CD8-positive, alpha-beta T cell (primary cell): ENCODE measurements at regions of chr2 and their contacts with region 1.

Region 1: DNA sequence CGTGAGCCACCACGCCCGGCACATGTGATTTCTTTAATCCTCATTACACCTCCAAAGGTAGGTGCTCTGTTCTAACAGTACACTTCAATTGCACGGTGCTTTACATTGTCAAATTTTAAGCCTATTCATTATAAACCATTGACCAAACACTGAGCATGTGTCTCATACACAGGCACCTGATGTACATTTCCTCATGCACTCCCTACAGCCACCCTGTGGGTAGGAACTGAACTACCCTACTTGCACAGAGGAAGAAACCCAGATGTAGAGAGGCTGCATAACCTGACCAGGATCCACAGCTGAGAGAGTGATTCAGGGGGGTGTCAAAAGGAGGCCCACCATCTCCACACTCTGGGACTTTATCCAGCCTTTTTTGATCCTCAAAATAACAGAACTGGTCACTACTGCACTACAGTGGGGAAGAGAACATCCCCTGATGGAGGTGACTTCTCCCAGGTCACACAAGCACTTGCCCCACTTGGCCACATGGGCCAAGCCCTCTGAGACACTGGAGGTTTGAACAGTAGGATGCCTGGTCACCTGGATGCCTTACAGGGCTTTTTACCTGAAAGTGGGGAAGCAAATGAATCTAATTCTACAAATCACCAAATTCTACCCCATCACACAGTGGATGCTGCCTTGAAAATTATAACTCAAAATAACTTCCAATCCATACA is 6.9 kb upstream of the DPYSL5 start:
- DNase-seq: peak in 1 of 9 experiments; percentile 8
- ATAC-seq: no peak
- H3K4me3 ChIP-seq: no peak overlapping the region
- H3K4me3 Mint-ChIP-seq: no peak overlapping the region
- H3K27ac ChIP-seq: no peak overlapping the region
- H3K27ac Mint-ChIP-seq: no peak overlapping the region
- H3K4me1 ChIP-seq: no peaks in the 10 kb centered on the region
- H3K4me1 Mint-ChIP-seq: no peaks in the 10 kb centered on the region
- H3K27me3 ChIP-seq: peaks cover 0 to 5% of the 10 kb centered on the region in 2 experiments
- H3K27me3 Mint-ChIP-seq: peaks cover 33% of the 10 kb centered on the region
- CTCF ChIP-seq: no peak

Region 2: GRCh38 chr2:26692279-26692896 is 148.7 kb before region 1 on chr2 and contains the start of gene KCNK3:
- CTCF ChIA-PET with region 1: no interaction called
- POLR2A ChIA-PET with region 1: no interaction called
- intact Hi-C with region 1: loop called in 1 of 2 experiments (anchors 5 kb)
- DNase-seq: peak; percentile 4 to 57 (median 38)
- ATAC-seq: peak; percentile 93
- H3K4me3 ChIP-seq: no peak within 1 kb of the TSS
- H3K4me3 Mint-ChIP-seq: peak within 1 kb of the TSS; percentile 60
- H3K27ac ChIP-seq: no peak within 1 kb of the TSS
- H3K27ac Mint-ChIP-seq: no peak within 1 kb of the TSS
- H3K4me1 ChIP-seq: peaks cover 5% of the 10 kb centered on the region
- H3K4me1 Mint-ChIP-seq: peaks cover 5% of the 10 kb centered on the region
- H3K27me3 ChIP-seq: peaks cover 18 to 21% of the 10 kb centered on the region in 2 experiments
- H3K27me3 Mint-ChIP-seq: peaks cover 53% of the 10 kb centered on the region
- CTCF ChIP-seq: no peak
- total RNA-seq, gene KCNK3: not detected

Region 3: DNA sequence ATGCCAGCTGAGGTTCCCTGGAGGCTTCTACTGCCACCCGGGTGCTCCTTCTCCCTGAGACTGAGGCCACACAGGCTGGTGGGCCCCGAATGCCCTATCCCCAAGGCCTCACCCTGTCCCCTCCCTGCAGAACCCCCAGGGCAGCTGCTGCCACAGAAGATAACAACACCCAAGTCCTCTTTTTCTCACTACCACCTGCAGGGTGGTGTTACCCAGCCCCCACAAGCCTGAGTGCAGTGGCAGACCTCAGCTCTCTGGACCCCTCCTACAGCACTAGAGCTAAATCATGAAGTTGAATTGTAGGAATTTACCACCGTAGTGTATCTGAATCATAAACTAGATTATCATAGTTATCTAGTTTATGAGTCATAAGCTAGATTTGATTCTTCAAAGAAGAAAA is 62.6 kb before region 1 on chr2:
- CTCF ChIA-PET with region 1: no interaction called
- POLR2A ChIA-PET with region 1: no interaction called
- intact Hi-C with region 1: no loop called
- DNase-seq: no peak
- ATAC-seq: no peak
- H3K4me3 ChIP-seq: no peak overlapping the region
- H3K4me3 Mint-ChIP-seq: no peak overlapping the region
- H3K27ac ChIP-seq: no peak overlapping the region
- H3K27ac Mint-ChIP-seq: peak overlapping the region; percentile 14
- H3K4me1 ChIP-seq: no peaks in the 10 kb centered on the region
- H3K4me1 Mint-ChIP-seq: peaks cover 7% of the 10 kb centered on the region
- H3K27me3 ChIP-seq: no peaks in the 10 kb centered on the region
- H3K27me3 Mint-ChIP-seq: no peaks in the 10 kb centered on the region
- CTCF ChIP-seq: no peak

Region 4: DNA sequence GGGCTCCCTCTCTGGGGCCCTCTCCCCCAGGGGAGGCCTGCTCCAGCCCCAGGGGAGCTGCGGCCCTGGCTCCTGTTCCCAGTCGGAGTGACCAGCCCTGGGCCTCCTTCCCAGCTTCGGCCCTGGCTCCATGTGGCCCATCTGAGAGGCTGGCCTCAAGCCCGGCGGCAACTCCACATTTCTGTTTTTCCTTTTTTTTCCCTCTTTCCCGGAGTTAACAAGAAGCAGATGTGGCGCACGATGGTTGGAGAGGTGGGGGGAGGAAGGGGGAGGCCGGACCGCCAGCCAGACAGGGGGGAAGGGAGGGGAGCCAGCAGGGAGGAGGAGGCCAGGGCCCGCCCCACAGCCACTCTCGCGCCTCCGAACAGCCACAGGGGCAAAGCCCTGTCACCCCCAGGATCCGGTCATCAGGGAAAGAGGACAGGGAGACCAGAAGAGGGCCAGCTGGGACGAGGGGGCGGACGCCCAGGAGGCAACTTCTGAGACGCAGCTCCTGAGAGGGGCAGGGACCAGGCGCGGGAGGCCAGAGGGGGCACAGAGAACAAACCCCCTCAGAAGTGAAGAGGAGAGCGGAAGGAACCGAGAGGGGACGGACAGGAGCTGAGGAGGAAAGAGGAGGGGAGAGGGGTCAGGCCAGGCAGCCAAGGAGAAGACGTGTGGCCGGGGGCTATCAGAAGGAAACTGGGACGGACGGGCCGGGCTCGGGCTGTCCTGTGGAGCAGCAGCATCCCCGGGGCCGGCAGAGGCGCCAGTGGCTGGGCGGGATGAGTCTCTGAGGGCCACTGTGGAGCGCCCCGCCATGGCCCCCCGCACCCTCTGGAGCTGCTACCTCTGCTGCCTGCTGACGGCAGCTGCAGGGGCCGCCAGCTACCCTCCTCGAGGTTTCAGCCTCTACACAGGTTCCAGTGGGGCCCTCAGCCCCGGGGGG is 237.5 kb after region 1 on chr2 and contains the start of gene EMILIN1:
- CTCF ChIA-PET with region 1: no interaction called
- POLR2A ChIA-PET with region 1: no interaction called
- intact Hi-C with region 1: no loop called
- DNase-seq: no peak
- ATAC-seq: no peak
- H3K4me3 ChIP-seq: no peak within 1 kb of the TSS
- H3K4me3 Mint-ChIP-seq: no peak within 1 kb of the TSS
- H3K27ac ChIP-seq: no peak within 1 kb of the TSS
- H3K27ac Mint-ChIP-seq: no peak within 1 kb of the TSS
- H3K4me1 ChIP-seq: peaks cover 39% of the 10 kb centered on the region
- H3K4me1 Mint-ChIP-seq: peaks cover 41% of the 10 kb centered on the region
- H3K27me3 ChIP-seq: no peaks in the 10 kb centered on the region
- H3K27me3 Mint-ChIP-seq: no peaks in the 10 kb centered on the region
- CTCF ChIP-seq: no peak
- total RNA-seq, gene EMILIN1: 0.11 TPM in 1 of 2 experiments, not detected in the other